OCI-LY7 (cell line): ENCODE measurements at regions of chr13 and their contacts with region 1.

Region 1: GRCh38 chr13:110455941-110456340 is 105.6 kb downstream of the RAB20 start:
- DNase-seq: peak; percentile 69
- H3K4me3 ChIP-seq: peak overlapping the region; percentile 23
- H3K27ac ChIP-seq: no peak overlapping the region
- H3K4me1 ChIP-seq: peaks cover 13% of the 10 kb centered on the region
- CTCF ChIP-seq: peak; percentile 80

Region 2: DNA sequence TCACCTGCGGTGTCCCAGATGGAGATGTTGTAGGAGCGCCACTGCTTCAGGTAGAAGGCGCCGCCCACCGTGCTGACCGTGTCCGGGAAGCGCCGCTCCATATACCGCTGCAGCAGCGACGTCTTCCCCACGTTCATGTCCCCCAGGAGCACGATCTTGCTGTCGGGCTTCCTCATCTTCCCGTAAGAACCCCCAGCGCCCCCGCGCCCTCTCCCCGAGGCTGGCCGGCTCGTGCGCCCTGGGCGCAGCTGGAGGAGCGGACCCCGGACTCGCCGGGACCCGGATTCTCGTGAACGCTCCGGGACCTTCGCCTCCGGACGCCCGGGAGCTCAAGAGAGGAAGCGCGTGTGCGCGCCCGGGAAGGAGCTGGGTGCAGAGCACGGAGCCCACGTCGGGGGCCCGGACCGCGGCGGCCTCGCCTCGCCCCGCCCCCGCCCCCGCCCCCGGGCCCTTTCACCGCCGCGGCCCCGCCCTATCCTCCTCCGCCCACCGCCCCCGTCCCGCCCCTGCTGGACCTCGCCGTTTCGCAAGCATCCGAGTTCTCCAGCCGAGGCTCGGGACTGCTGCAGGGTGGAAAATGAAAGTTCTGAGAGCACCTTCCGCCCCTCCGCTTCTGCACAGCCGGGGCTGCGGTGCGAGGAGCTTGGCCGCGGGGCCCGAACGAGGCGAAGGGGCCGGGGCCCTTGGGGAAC is 105.5 kb after region 1 on chr13 and contains the start of gene RAB20:
- CTCF ChIA-PET with region 1: no interaction called
- POLR2A ChIA-PET with region 1: no interaction called
- intact Hi-C with region 1: loop called (anchors 2 kb)
- DNase-seq: peak; percentile 37
- H3K4me3 ChIP-seq: peak within 1 kb of the TSS; percentile 71
- H3K27ac ChIP-seq: no peak within 1 kb of the TSS
- H3K4me1 ChIP-seq: no peaks in the 10 kb centered on the region
- CTCF ChIP-seq: no peak
- total RNA-seq, gene RAB20: not detected in 2 replicates

Region 3: DNA sequence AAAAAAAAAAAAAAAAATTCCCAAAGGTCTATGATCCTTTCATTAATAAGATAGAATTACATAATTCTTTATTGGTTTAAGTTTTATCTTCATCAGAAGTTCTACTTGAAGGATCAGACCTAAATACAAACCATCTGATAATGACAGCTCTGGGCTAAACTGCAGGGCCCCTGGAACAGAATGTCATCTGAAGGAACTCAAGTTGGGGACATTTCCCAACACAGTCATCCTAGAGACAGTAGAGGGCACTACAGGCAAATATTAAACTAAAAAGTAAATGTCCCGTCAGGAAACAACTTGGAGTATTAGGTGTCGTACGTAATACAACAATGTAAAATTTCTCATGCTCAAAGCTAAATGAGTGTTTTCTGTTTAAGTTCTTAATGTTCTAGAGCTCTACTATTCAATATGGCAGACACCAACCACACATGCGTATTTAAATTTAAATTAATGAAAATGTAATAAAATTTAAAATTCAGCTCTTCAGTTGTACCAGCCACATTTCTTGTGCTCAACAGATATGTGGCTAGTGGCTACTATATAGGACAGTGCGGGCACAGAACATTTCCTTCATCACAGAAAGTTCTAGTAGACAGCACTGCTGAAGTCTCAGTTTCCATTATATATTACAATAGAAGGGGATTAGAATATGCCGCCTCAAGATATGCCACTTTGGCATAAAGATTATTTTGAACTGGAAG is 137.6 kb after region 1 on chr13:
- CTCF ChIA-PET with region 1: no interaction called
- POLR2A ChIA-PET with region 1: no interaction called
- intact Hi-C with region 1: loop called (anchors 10 kb)
- DNase-seq: peak; percentile 49
- H3K4me3 ChIP-seq: no peak overlapping the region
- H3K27ac ChIP-seq: no peak overlapping the region
- H3K4me1 ChIP-seq: no peaks in the 10 kb centered on the region
- CTCF ChIP-seq: peak; percentile 75

Region 4: DNA sequence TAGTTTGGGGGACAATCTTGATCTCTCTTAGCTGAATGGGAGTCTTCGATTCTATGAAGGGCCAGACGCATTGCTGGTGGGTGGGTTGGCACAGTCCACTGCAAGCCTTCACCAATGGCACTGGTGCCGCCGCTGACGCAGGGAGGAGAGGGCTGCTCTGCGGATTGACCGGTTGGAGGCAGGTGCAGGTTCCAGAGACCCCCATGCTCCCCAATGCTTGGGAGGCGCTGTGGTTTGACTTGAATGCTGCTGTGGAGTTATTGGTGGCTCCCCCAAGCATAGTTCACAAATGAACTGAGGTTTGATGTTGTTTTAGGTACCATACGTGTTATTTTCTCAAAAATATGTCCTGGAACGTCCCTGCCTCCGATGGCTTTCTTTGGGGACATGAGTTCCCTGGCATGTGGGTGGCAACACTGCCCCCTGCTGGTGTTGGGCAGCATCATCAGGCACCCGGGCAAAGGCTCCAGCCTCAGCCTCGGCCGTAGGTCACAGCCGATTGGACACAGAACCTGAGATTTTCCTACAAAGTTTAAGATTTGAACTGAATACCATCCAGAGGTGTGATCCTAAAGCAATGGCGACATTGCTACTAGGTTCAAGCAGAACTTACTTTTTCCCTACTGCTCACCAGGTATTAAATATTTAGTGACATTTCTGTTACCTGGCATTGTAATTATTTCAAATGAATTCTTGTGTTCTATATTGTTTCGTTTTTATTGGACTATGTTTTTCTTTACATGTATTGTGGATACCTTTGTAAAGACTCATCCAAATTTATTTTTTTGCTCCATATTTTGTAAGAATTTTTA is 363.5 kb after region 1 on chr13:
- CTCF ChIA-PET with region 1: no interaction called
- POLR2A ChIA-PET with region 1: no interaction called
- intact Hi-C with region 1: loop called (anchors 1 kb)
- DNase-seq: peak; percentile 48
- H3K4me3 ChIP-seq: no peak overlapping the region
- H3K27ac ChIP-seq: no peak overlapping the region
- H3K4me1 ChIP-seq: no peaks in the 10 kb centered on the region
- CTCF ChIP-seq: peak; percentile 84